ENCODE measurements at regions of chr18 and their contacts with region 1.

Region 1: GRCh38 chr18:67104700-67105284 is 411.7 kb downstream of the DSEL start:
- DNase-seq: peak; percentile 37 to 50
- ATAC-seq: peak in 3 of 4 donors; percentile 36 to 80 (median 74)
- H3K4me3 ChIP-seq: no peak overlapping the region
- H3K27ac ChIP-seq: no peak overlapping the region
- H3K4me1 ChIP-seq: no peaks in the 10 kb centered on the region
- H3K27me3 ChIP-seq: no peaks in the 10 kb centered on the region
- CTCF ChIP-seq: peak; percentile 52

Region 2: GRCh38 chr18:67199993-67200617 is 95.3 kb after region 1 on chr18:
- intact Hi-C with region 1: loop called (anchors 5 kb)
- DNase-seq: no peak
- ATAC-seq: peak in 1 of 4 donors; percentile 64
- H3K4me3 ChIP-seq: no peak overlapping the region
- H3K27ac ChIP-seq: no peak overlapping the region
- H3K4me1 ChIP-seq: no peaks in the 10 kb centered on the region
- H3K27me3 ChIP-seq: peaks cover 0 to 2% (median 0%) of the 10 kb centered on the region in 3 donors
- CTCF ChIP-seq: peak; percentile 58

Region 3: DNA sequence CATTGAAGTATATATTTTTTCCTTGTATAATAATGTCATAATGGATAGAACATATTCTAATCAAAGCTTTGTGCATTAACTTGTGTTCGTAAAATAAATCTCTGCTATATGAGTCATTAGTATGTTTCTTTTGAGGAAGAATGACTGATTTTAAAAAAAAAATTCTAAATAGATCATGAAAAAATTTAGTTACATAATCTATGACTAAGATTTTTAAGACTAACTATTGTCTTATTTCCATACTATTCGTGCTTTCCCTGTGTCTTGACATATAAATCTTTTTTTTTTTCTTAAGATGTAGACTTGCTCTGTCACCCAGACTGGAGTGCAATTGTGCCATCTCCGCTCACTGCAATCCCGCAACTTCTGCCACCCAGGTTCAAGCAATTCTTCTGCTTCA is 185.6 kb after region 1 on chr18:
- intact Hi-C with region 1: no loop called
- DNase-seq: no peak
- ATAC-seq: no peak
- H3K4me3 ChIP-seq: no peak overlapping the region
- H3K27ac ChIP-seq: no peak overlapping the region
- H3K4me1 ChIP-seq: no peaks in the 10 kb centered on the region
- H3K27me3 ChIP-seq: no peaks in the 10 kb centered on the region
- CTCF ChIP-seq: no peak